Activated T-helper 2 cell treated with anti-CD3 and anti-CD28 coated beads, Interferon-gamma antibody, Interleukin-2, Interleukin-4, amounts not matched to agents 10 μg/mL and 5 μg/mL and 100 μg/mL, durations not matched to agents 14 hours and 24 hours and 36 hours (primary cell): ENCODE measurements at regions of chr17 and their contacts with region 1.

Region 1: DNA sequence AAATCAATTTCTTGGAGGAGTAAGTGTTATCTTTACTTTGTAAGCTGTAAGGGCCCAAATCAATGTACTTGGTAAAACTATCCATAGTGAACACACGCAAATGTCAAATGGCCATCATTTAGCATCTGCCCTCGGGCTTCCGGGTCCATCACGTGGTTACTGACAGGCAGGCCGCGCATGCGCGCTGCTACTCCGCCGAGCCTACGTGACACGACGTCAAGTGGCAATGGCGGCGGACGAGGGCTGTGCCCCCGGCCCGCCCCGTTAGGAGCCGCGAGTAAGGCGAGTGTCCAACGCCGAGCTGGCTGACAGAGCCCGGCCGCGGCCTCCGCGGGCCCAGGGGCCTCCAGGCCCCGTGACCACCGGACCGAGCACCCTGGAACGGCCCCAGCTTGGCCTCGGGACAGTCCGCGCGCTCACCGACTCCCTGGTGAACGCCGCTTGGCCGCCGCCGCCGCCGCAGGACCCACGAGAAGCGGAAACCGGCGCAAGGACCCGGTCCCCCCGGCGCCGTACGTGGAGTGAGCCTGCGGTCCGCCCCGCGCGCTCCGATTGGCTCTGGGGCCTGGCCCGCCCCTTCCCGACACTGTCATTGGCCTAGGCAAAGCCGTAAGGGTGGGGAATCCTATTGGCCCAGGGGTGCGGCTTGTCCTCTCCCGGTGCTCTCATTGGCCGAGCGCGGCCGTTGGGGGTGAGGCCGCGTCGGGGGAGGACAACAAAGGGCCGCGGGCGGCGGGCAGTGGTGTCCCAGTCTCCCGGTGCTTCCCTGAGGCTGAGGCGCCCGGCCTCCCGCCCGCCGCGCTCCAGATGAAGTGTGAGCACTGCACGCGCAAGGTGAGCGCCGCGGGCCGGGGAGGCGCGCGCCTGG is at the start of gene NARF:
- DNase-seq: peak; percentile 97
- H3K4me3 Mint-ChIP-seq: peak within 1 kb of the TSS; percentile 94
- H3K27ac Mint-ChIP-seq: peak within 1 kb of the TSS; percentile 95
- H3K4me1 Mint-ChIP-seq: peaks cover 23% of the 10 kb centered on the region
- H3K27me3 Mint-ChIP-seq: no peaks in the 10 kb centered on the region
- total RNA-seq, gene NARF: 114 and 123 TPM in 2 replicates

Region 2: GRCh38 chr17:82283208-82283749 is 175.0 kb before region 1 on chr17:
- intact Hi-C with region 1: no loop called
- DNase-seq: no peak
- H3K4me3 Mint-ChIP-seq: no peak overlapping the region
- H3K27ac Mint-ChIP-seq: peak overlapping the region; percentile 19
- H3K4me1 Mint-ChIP-seq: peaks cover 22% of the 10 kb centered on the region
- H3K27me3 Mint-ChIP-seq: peaks cover 5% of the 10 kb centered on the region

Region 3: GRCh38 chr17:82418001-82418986 is 39.9 kb before region 1 on chr17 and contains the starts of genes HEXD and OGFOD3:
- intact Hi-C with region 1: loop called (anchors 1 kb)
- DNase-seq: peak; percentile 85
- H3K4me3 Mint-ChIP-seq: peak within 1 kb of the TSS; percentile 77
- H3K27ac Mint-ChIP-seq: peak within 1 kb of the TSS; percentile 60
- H3K4me1 Mint-ChIP-seq: peaks cover 22% of the 10 kb centered on the region
- H3K27me3 Mint-ChIP-seq: no peaks in the 10 kb centered on the region
- total RNA-seq, gene HEXD: 36.6 and 36.7 TPM in 2 replicates
- total RNA-seq, gene OGFOD3: 29.1 and 30.5 TPM in 2 replicates

Region 4: GRCh38 chr17:82475458-82475857 is 17.2 kb after region 1 on chr17:
- intact Hi-C with region 1: no loop called
- DNase-seq: no peak
- H3K4me3 Mint-ChIP-seq: no peak overlapping the region
- H3K27ac Mint-ChIP-seq: no peak overlapping the region
- H3K4me1 Mint-ChIP-seq: peaks cover 11% of the 10 kb centered on the region
- H3K27me3 Mint-ChIP-seq: no peaks in the 10 kb centered on the region

Region 5: GRCh38 chr17:82494236-82495055 is 36.2 kb after region 1 on chr17:
- intact Hi-C with region 1: loop called (anchors 1 kb)
- DNase-seq: peak; percentile 84
- H3K4me3 Mint-ChIP-seq: peak overlapping the region; percentile 54
- H3K27ac Mint-ChIP-seq: peak overlapping the region; percentile 88
- H3K4me1 Mint-ChIP-seq: peaks cover 25% of the 10 kb centered on the region
- H3K27me3 Mint-ChIP-seq: no peaks in the 10 kb centered on the region

Region 6: DNA sequence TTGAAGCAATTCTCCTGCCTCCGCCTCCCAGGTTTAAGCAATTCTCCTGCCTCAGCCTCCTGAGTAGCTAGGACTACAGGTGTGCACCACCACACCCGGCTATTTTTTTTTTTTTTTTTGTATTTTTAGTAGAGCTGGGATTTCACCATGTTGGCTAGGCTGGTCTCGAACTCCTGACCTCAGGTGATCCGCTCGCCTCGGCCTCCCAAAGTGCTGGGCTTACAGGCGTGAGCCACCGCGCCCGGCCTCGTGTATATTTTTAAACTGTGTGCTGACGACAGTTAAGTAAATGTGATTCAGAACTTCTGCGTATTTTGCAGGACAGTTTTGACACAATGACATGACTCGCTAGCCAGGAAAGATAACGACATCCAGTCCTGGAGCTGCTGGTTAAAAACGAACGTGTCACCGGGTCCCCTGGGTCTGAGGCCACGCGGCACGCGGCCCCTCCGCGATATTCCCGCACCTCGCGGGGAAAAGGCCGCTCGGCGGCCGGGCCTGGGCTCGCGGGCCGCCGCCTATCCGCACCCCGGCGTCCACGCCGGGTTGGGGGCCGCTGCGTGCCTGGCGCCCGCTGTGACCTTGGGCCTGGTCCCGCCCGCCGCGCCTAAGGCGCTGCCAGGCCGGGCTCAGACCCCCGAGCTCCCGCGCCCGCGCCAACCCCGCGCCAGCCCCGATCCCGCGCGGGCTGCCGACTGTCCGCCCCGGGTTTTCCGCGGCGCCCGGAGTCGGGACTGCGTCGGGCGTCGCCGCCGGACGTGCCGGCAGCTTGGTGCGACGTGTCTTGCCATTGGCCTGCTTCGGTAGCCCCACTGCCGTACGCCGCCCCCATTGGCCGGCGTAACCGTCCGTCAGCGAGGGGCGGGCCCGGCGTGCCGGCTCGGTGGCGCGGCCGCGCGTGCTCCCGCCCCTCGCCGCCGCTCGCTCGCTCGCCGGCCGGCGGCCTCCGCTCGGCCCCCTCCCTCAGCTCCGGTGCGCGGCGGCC is 60.9 kb after region 1 on chr17 and contains the start of gene FOXK2:
- intact Hi-C with region 1: loop called (anchors 1 kb)
- DNase-seq: peak; percentile 95
- H3K4me3 Mint-ChIP-seq: peak within 1 kb of the TSS; percentile 93
- H3K27ac Mint-ChIP-seq: peak within 1 kb of the TSS; percentile 95
- H3K4me1 Mint-ChIP-seq: peaks cover 16% of the 10 kb centered on the region
- H3K27me3 Mint-ChIP-seq: no peaks in the 10 kb centered on the region
- total RNA-seq, gene FOXK2: 92.9 and 95.2 TPM in 2 replicates

Region 7: GRCh38 chr17:82551779-82552457 is 93.7 kb after region 1 on chr17:
- intact Hi-C with region 1: loop called (anchors 5 kb)
- DNase-seq: peak; percentile 70
- H3K4me3 Mint-ChIP-seq: no peak overlapping the region
- H3K27ac Mint-ChIP-seq: no peak overlapping the region
- H3K4me1 Mint-ChIP-seq: peaks cover 27% of the 10 kb centered on the region
- H3K27me3 Mint-ChIP-seq: no peaks in the 10 kb centered on the region

Region 8: DNA sequence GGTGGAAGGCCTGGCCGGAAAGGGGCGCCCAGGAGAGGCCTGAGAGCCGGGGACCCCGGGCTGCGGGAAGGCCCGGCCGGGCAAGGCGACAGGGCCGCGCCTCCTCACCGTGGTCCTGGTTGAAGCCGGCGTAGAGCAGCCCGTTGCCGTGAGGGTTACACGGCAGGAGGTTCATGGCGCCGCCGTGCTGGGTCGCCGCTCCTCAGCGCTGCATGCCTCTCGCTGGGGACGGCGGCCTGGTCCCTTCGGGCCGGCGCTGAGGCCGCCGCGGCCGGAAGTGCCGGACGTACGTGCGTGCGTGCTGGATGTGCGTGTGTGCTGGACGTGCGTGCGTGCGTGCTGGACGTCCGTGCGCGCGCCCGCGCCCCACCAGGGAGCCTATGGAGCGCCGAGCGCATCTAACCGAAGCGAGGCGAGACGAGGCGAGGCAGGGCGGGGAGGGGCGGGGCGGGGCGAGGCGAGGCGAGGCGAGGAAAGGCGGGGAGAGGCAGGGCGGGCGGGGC is 190.0 kb after region 1 on chr17 and contains the start of gene WDR45B:
- intact Hi-C with region 1: loop called (anchors 5 kb)
- DNase-seq: peak; percentile 86
- H3K4me3 Mint-ChIP-seq: peak within 1 kb of the TSS; percentile 84
- H3K27ac Mint-ChIP-seq: peak within 1 kb of the TSS; percentile 71
- H3K4me1 Mint-ChIP-seq: peaks cover 10% of the 10 kb centered on the region
- H3K27me3 Mint-ChIP-seq: no peaks in the 10 kb centered on the region
- total RNA-seq, gene WDR45B: 63.1 and 66.9 TPM in 2 replicates